ENCODE measurements at regions of chr4 and their contacts with region 1.

Region 1: DNA sequence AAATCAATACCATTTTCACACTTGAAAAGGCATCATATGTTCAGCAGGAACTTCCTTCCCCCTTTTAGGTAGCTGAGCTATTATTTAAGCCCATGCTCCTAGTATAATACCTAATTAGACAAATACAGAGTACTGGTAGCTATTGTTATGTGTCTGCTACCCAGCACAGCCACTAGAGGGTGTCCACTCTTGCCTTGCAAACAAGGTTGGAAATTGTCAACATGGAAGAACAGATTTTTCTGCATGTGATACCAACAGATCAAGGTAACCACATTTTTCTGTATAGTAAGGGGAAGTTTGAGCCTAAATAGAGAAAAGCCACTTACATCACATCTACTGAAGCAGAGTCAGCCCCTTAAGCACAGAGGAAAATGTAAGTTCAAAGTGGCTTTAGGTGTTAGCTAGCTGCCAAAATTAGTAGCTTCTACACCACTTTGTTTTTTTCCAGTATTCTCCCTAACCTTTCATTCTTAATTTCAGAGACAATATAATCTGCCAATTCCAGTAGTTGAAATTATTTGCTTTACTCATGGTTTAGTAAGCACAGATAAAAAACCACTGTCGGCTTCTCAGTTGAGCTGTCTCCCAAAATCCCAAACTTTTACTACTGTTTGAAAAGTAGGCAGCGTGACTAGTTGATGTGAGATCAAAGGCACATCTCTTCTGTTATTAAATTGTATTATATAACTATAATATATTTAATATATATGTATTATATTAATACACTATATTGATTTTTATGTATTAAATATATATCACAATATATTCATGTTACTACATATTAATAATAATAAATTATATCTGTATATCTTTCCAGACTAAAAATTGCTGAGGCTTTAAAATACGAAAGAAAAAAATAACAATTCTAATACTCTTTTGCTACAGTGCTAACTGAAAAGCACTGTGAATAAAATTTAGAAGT is 38.2 kb downstream of the EDNRA start:
- DNase-seq: peak; percentile 74
- ATAC-seq: peak; percentile 64
- H3K4me3 ChIP-seq: no peak overlapping the region
- H3K27ac ChIP-seq: no peak overlapping the region
- H3K4me1 ChIP-seq: peaks cover 12% of the 10 kb centered on the region; the same call in 1 of the 2 replicates
- H3K27me3 ChIP-seq: no peaks in the 10 kb centered on the region
- CTCF ChIP-seq: peak; percentile 89

Region 2: GRCh38 chr4:147160908-147161513 is 358.1 kb before region 1 on chr4:
- CTCF ChIA-PET with region 1: interaction called, 6 read pairs
- POLR2A ChIA-PET with region 1: no interaction called
- intact Hi-C with region 1: loop called (anchors 1 kb)
- DNase-seq: peak; percentile 58
- ATAC-seq: no peak
- H3K4me3 ChIP-seq: no peak overlapping the region
- H3K27ac ChIP-seq: no peak overlapping the region
- H3K4me1 ChIP-seq: peaks cover 6% of the 10 kb centered on the region
- H3K27me3 ChIP-seq: no peaks in the 10 kb centered on the region
- CTCF ChIP-seq: peak; percentile 72

Region 3: DNA sequence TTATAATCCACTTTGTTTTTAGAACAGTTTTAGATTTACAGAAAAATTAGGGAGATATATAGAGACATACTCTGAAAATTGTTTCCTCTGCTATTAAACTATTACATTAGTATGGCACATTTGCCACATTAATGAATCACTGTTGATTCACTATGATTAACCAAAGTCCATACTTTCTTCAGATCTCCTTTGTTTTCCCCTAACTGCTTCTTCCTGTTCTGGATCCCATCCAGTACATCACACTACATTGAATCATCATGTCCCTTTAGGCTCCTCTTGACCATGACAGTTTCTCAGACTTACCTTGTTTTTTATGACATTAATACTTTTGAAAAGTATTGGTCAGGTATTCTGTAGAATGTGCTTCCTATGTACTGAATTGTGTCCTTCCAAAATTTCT is 147.4 kb before region 1 on chr4:
- CTCF ChIA-PET with region 1: no interaction called
- POLR2A ChIA-PET with region 1: no interaction called
- intact Hi-C with region 1: loop called (anchors 10 kb)
- DNase-seq: peak; percentile 91
- ATAC-seq: peak; percentile 88
- H3K4me3 ChIP-seq: no peak overlapping the region
- H3K27ac ChIP-seq: peak overlapping the region; percentile 94
- H3K4me1 ChIP-seq: peaks cover 24% of the 10 kb centered on the region
- H3K27me3 ChIP-seq: no peaks in the 10 kb centered on the region
- CTCF ChIP-seq: no peak

Region 4: GRCh38 chr4:147590249-147590920 is 71.3 kb after region 1 on chr4:
- CTCF ChIA-PET with region 1: interaction called, 5 read pairs
- POLR2A ChIA-PET with region 1: no interaction called
- intact Hi-C with region 1: loop called (anchors 1 kb)
- DNase-seq: peak; percentile 79
- ATAC-seq: peak; percentile 38
- H3K4me3 ChIP-seq: no peak overlapping the region
- H3K27ac ChIP-seq: no peak overlapping the region
- H3K4me1 ChIP-seq: 0 out of 2 replicates have a peak, but pooled peaks cover 7% of the 10 kb centered on the region
- H3K27me3 ChIP-seq: no peaks in the 10 kb centered on the region
- CTCF ChIP-seq: peak; percentile 74

Region 5: DNA sequence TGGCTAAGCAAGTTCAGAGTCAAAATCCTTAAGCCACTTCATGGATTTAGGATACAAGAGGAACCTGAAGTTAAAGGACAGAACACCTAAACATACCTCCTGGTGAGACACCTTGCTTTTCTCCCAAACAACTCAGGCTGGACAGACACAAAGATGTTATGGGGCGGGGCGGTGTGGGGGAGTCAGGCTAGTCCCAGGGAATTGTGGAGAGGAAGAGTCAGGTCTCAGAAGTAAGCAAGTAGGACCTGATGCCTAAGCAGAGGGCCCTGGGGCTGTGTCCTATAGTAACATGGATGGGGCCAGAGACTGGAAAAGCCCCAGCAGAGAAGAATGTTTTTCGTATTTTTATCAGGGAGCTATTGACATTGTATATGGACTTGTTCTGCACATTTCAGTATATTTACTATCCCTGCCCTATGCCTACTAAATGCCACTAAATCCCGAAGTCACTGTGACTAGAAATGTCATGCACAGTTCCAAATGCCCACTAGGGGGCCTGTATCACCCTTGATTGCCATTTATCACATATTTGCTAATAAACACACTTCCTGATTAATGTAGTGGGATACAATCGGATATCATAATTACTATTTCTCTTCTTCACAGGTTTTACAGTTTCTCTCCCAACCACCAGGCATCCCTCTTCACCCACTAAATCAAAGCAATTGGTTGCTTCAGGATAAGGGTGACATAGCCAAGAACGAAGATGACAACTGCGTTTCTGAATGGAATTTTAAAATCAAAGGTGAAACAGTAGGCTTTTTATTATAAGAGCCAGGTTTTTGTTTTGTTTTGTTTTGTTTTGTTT is 189.0 kb after region 1 on chr4:
- CTCF ChIA-PET with region 1: no interaction called
- POLR2A ChIA-PET with region 1: no interaction called
- intact Hi-C with region 1: no loop called
- DNase-seq: peak; percentile 64
- ATAC-seq: peak; percentile 66
- H3K4me3 ChIP-seq: no peak overlapping the region
- H3K27ac ChIP-seq: no peak overlapping the region
- H3K4me1 ChIP-seq: no peaks in the 10 kb centered on the region
- H3K27me3 ChIP-seq: no peaks in the 10 kb centered on the region
- CTCF ChIP-seq: peak; percentile 87

Region 6: GRCh38 chr4:147731580-147732517 is 212.7 kb after region 1 on chr4 and contains the start of gene ARHGAP10:
- CTCF ChIA-PET with region 1: no interaction called
- POLR2A ChIA-PET with region 1: no interaction called
- intact Hi-C with region 1: no loop called
- DNase-seq: peak; percentile 71
- ATAC-seq: peak; percentile 67
- H3K4me3 ChIP-seq: peak within 1 kb of the TSS; percentile 95
- H3K27ac ChIP-seq: peak within 1 kb of the TSS; percentile 59
- H3K4me1 ChIP-seq: peaks cover 56% of the 10 kb centered on the region
- H3K27me3 ChIP-seq: no peaks in the 10 kb centered on the region
- CTCF ChIP-seq: no peak
- total RNA-seq, gene ARHGAP10: 9.0 and 12.0 TPM in 2 replicates